A673 (cell line): ENCODE measurements at regions of chr9 and their contacts with region 1.

Region 1: GRCh38 chr9:95023217-95024003 is 294.1 kb downstream of the FANCC start:
- DNase-seq: no peak
- H3K4me3 ChIP-seq: no peak overlapping the region
- H3K27ac ChIP-seq: no peak overlapping the region
- H3K4me1 ChIP-seq: peaks cover 33% of the 10 kb centered on the region
- H3K27me3 ChIP-seq: no peaks in the 10 kb centered on the region
- CTCF ChIP-seq: no peak

Region 2: GRCh38 chr9:94802793-94803192 is 220.6 kb before region 1 on chr9:
- CTCF ChIA-PET with region 1: no interaction called
- POLR2A ChIA-PET with region 1: no interaction called
- intact Hi-C with region 1: no loop called
- DNase-seq: peak; percentile 13
- H3K4me3 ChIP-seq: no peak overlapping the region
- H3K27ac ChIP-seq: no peak overlapping the region
- H3K4me1 ChIP-seq: peaks cover 31% of the 10 kb centered on the region
- H3K27me3 ChIP-seq: no peaks in the 10 kb centered on the region
- CTCF ChIP-seq: no peak

Region 3: GRCh38 chr9:94860968-94861871 is 162.2 kb before region 1 on chr9:
- CTCF ChIA-PET with region 1: no interaction called
- POLR2A ChIA-PET with region 1: no interaction called
- intact Hi-C with region 1: no loop called
- DNase-seq: no peak
- H3K4me3 ChIP-seq: no peak overlapping the region
- H3K27ac ChIP-seq: no peak overlapping the region
- H3K4me1 ChIP-seq: peaks cover 25% of the 10 kb centered on the region
- H3K27me3 ChIP-seq: no peaks in the 10 kb centered on the region
- CTCF ChIP-seq: no peak

Region 4: DNA sequence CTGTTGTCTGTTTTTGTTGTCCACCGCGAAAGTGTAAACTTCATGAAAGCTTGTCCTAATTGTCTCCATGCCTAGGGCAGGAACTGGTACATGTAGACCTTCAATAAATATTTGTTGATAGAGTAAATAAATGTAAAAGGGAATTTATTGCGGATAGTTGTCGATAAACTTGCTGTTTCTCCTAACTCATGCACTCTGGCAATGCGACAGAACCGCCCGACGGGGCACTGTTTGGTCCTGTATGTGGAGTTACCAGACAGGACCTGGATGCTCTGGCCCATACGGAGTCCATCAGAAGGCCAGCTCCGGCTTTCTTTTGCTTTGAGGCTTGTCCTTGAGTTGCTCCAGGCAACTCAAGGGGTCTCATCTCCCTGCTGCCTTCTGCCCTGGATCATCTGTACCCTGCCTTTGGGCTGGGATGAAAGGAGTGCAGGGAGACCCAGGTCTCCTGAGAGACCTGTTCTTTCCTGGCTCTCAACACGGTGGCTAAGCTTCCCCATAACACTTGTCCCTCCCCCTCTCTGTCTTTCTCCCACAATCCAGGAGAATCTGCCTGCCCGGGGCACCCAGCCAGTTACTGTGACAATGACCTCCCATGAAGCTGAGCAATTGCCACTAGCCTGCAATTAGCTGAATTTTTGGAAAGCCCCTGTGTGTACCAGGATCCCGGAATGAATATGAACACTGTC is 642.8 kb after region 1 on chr9:
- CTCF ChIA-PET with region 1: no interaction called
- POLR2A ChIA-PET with region 1: interaction called, 10 read pairs
- intact Hi-C with region 1: no loop called
- DNase-seq: no peak
- H3K4me3 ChIP-seq: no peak overlapping the region
- H3K27ac ChIP-seq: no peak overlapping the region
- H3K4me1 ChIP-seq: no peaks in the 10 kb centered on the region
- H3K27me3 ChIP-seq: no peaks in the 10 kb centered on the region
- CTCF ChIP-seq: no peak